Activated CD4-positive, alpha-beta memory T cell treated with anti-CD3 and anti-CD28 coated beads for 36 hours (primary cell): ENCODE measurements at regions of chr13 and their contacts with region 1.

Region 1: DNA sequence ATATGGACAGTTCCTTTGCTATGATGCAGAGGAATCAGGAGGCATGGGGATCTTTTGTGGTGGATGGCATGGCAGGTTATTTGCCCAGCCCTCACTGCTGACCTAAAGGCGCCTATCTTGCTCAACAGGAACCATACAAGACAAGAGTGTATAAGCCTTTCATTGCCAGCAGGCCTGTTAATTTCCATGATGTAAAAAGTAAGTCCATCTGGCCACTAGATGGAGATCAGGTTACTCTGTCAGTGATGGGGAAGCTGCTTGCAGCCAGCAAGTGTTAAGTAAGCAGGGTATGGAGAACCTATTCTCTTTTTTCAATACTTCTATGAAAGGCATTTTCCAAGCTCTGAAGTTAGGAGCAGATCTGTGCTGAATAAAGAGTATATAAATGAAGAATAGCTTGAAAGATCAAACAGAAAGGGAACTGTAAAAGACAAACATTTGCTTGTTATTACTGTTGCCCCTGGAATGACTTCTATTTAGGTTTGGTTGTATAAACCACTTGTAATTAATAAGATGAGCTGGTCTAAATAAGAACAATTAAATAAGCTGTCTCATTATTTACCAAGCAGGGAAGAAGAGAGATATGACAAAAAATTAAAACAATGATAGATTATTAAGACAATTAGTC is 210.9 kb downstream of the RGCC start:
- DNase-seq: peak; percentile 30
- H3K4me3 Mint-ChIP-seq: no peak overlapping the region
- H3K27ac Mint-ChIP-seq: no peak overlapping the region
- H3K4me1 Mint-ChIP-seq: no peaks in the 10 kb centered on the region
- H3K27me3 Mint-ChIP-seq: no peaks in the 10 kb centered on the region

Region 2: DNA sequence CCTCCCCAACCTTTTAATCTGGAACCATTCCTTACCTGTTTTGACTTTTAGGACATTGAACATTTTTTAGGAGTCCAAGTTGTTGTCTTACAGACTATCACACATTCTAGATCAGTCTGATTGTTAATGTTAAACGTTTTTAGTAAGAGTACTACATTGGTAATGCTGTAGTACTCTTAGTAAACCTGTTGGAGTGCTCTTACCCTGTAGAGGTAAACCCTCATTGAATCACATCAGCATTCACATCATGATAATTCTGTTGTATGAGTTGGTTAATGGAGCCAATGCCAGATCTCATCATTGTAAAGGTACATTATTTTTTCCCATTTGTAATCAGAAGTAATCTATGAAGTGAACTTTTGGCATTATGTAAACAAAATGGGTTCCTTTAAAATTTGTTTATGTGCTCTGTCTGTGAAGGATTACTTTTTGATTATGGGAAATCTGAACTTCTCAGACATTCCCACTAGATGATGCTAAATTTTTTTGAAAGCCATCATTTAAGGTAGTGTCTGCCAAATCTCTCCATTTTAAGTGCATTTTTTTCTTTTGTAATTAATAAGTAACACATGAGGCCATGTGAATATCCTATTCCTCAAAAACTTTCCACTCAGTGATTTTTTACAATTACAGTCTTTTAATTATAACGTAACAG is 237.5 kb after region 1 on chr13:
- CTCF ChIA-PET with region 1: no interaction called
- POLR2A ChIA-PET with region 1: no interaction called
- intact Hi-C with region 1: loop called (anchors 5 kb)
- DNase-seq: no peak
- H3K4me3 Mint-ChIP-seq: no peak overlapping the region
- H3K27ac Mint-ChIP-seq: no peak overlapping the region
- H3K4me1 Mint-ChIP-seq: peaks cover 9% of the 10 kb centered on the region
- H3K27me3 Mint-ChIP-seq: no peaks in the 10 kb centered on the region